H1 (cell line): ENCODE measurements at regions of chr1 and their contacts with region 1.

Region 1: DNA sequence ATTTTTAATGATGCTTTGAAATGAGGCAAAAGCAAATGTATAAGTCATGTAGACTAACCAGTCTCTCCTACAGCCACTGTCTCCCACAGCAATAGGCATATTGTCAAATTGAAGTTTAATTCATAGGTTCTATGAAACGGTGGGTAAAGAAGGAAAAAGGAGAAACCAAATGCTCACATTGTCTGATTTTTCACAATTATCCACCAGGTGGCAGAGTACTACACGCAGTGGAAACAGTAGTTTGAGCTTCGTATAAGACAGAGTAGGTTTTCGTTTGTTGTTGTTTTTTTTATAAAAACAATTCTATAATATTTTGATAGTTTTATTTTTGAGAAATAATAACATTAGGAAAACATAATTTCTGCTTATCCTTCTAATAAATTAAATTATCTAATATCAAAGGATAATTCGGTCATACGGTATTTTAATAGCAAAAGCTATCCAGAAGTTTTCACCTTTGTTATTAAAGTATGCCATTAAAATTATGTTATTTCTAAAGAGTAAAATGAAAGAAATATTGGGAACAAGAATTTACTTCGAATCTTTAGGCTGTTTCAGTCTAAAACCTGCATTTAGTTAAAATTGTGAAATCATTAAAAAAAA is 39.1 kb downstream of the TYW3 start:
- DNase-seq: no peak
- H3K4me3 ChIP-seq: no peak overlapping the region
- H3K27ac ChIP-seq: no peak overlapping the region
- H3K4me1 ChIP-seq: no peaks in the 10 kb centered on the region
- H3K27me3 ChIP-seq: no peaks in the 10 kb centered on the region
- CTCF ChIP-seq: peak in 2 of 3 experiments; percentile 63 to 69; a peak in 3 of 4 replicates
- EP300 ChIP-seq: no peak
- POLR2A ChIP-seq: no peak
- RAD21 ChIP-seq: peak; percentile 89 to 91

Region 2: DNA sequence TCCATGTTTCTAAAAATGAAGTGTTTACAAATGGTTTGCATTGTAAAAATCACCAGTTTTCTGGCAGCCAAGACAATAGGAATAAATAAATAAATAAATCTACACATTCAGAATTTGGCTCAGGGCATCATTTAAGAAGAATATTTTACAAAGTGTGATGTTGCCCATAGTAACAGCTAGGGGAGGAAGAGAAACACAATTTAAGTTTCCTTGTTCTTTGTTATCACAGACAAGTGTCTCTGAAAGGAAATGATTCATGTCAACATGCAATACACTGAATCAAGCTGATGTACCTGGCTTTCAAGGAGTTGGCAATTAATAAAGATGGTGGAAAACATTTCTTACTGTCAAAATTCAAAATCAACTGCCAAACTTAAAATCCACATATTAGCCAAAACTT is 436.8 kb after region 1 on chr1:
- CTCF ChIA-PET with region 1: interaction called, 42 read pairs
- POLR2A ChIA-PET with region 1: no interaction called
- DNase-seq: no peak
- H3K4me3 ChIP-seq: no peak overlapping the region
- H3K27ac ChIP-seq: no peak overlapping the region
- H3K4me1 ChIP-seq: no peaks in the 10 kb centered on the region
- H3K27me3 ChIP-seq: no peaks in the 10 kb centered on the region
- CTCF ChIP-seq: no peak
- EP300 ChIP-seq: no peak
- POLR2A ChIP-seq: no peak
- RAD21 ChIP-seq: no peak